Naive thymus-derived CD8-positive, alpha-beta T cell (primary cell): ENCODE measurements at regions of chr12 and their contacts with region 1.

Region 1: DNA sequence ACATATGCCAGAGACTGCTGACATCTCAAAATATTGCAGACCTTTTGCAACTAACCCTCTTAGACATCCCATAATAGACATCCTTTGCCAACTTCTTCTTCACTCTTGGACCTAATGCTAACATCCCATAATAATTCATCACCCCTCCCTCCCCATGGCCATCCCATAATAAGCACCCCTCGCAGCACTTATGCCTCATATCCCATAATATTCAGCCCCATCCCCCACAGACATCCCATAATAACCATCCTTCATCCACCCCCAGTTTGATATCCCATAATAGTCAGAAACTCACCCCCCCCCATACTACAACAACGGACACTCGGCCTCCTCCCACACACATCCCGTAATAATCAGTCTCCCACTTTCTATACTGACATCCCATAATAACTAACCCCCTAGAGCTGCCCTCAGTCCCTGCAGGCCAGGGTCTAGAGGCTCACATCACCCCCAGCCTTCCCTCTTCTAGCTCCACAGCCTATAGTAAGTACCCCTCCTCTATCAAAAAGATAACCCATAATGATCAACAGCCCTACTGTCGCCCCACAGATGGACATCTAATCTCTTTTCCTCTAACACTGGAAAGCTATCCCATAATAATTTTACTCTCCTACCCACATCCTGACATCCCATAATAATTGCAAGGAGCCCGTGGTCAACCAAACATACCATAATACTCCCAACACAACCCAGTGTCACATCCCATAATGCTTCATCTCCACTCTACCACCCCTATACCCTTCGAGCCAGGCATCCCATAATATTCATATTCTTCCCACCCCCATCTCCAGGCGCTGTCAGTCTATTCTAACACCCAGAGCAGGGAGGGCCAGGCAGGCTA is 792 bp upstream of the CHD4 start:
- DNase-seq: peak in 8 of 10 donors; percentile 61 to 80 (median 76)
- ATAC-seq: peak; percentile 26 to 60
- H3K4me3 Mint-ChIP-seq: no peak overlapping the region
- H3K27ac Mint-ChIP-seq: no peak overlapping the region
- H3K4me1 Mint-ChIP-seq: peaks cover 42 to 61% (median 53%) of the 10 kb centered on the region in 4 donors
- H3K27me3 Mint-ChIP-seq: no peaks in the 10 kb centered on the region

Region 2: DNA sequence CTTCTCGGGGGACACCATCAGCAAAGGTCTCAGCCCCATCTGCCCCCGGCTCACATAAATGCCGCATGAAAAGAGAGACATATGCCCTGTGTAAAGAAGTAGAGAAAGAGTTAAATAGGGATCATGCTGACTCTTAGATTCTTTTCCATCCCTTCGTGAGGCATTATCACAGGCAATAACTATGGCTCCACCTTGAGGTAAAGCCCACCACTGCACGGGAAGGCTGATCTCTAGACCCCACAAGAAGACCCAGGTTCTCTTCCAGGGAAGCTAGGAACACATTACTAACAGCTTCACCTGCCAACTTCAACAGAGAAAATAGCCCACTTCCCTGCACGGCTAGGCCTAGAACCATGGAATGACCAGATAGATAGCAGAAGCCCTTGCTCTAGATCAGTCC is 25.8 kb before region 1 on chr12:
- POLR2A ChIA-PET with region 1: interaction called, 10 read pairs
- DNase-seq: no peak
- ATAC-seq: peak in 1 of 2 donors; percentile 25
- H3K4me3 Mint-ChIP-seq: no peak overlapping the region
- H3K27ac Mint-ChIP-seq: peak overlapping the region in 5 of 10 donors; percentile 43 to 70 (median 58)
- H3K4me1 Mint-ChIP-seq: peaks cover 0 to 5% (median 3%) of the 10 kb centered on the region in 4 donors
- H3K27me3 Mint-ChIP-seq: no peaks in the 10 kb centered on the region

Region 3: GRCh38 chr12:6620137-6620884 is 12.3 kb after region 1 on chr12:
- POLR2A ChIA-PET with region 1: interaction called, 41 read pairs
- DNase-seq: peak in 9 of 10 donors; percentile 22 to 76 (median 57)
- ATAC-seq: peak; percentile 72 to 80
- H3K4me3 Mint-ChIP-seq: peak overlapping the region in 9 of 10 donors; percentile 33 to 76 (median 53)
- H3K27ac Mint-ChIP-seq: peak overlapping the region in 9 of 10 donors; percentile 37 to 94 (median 89)
- H3K4me1 Mint-ChIP-seq: peaks cover 22 to 54% (median 43%) of the 10 kb centered on the region in 4 donors
- H3K27me3 Mint-ChIP-seq: no peaks in the 10 kb centered on the region